AG04450 (cell line): ENCODE measurements at regions of chr6 and their contacts with region 1.

Region 1: GRCh38 chr6:150813319-150813992 is 52.0 kb upstream of the MTHFD1L start:
- DNase-seq: no peak
- H3K4me3 ChIP-seq: no peak overlapping the region
- H3K27ac ChIP-seq: no peak overlapping the region
- H3K27me3 ChIP-seq: no peaks in the 10 kb centered on the region
- CTCF ChIP-seq: no peak

Region 2: GRCh38 chr6:150079604-150080003 is 733.9 kb before region 1 on chr6:
- CTCF ChIA-PET with region 1: interaction called, 36 read pairs
- POLR2A ChIA-PET with region 1: no interaction called
- DNase-seq: no peak
- H3K4me3 ChIP-seq: no peak overlapping the region
- H3K27ac ChIP-seq: no peak overlapping the region
- H3K27me3 ChIP-seq: peaks cover 14% of the 10 kb centered on the region
- CTCF ChIP-seq: no peak

Region 3: DNA sequence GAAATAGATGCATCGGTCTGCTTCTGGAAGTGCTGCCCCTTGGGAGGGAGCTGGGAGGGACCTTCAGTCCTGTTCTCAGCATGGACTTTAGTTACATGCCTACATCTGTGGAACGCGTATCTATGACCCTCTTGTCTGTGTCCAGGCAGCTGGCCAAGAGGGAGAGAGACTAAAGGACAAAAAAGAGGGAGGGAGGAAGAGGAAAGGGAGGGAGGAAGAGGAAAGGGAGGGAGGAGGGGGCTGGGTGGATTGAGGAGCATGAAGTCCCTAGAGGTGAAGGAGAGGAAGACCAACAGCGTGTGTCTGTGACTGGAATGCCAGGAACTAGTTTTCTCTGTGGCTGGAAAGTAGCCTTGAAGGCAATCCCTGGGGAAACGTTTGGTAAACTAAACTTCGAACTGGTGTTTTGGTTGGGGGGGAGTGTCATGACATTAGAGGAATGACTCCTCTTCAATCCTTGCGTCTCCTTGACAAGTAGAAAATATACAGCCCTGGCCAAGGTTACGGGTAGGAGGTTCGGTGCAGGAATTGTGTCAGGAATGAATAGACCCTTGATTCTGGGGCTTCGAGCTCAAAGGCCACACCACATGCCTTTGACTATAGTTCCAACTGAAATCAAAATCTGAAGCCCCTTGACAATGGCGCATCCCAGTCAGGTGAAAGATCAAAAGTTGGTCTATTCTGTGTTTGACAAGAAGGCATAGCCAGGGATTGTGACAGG is 265.8 kb before region 1 on chr6:
- CTCF ChIA-PET with region 1: no interaction called
- POLR2A ChIA-PET with region 1: no interaction called
- DNase-seq: no peak
- H3K4me3 ChIP-seq: no peak overlapping the region
- H3K27ac ChIP-seq: no peak overlapping the region
- H3K27me3 ChIP-seq: peaks cover 3% of the 10 kb centered on the region
- CTCF ChIP-seq: no peak

Region 4: DNA sequence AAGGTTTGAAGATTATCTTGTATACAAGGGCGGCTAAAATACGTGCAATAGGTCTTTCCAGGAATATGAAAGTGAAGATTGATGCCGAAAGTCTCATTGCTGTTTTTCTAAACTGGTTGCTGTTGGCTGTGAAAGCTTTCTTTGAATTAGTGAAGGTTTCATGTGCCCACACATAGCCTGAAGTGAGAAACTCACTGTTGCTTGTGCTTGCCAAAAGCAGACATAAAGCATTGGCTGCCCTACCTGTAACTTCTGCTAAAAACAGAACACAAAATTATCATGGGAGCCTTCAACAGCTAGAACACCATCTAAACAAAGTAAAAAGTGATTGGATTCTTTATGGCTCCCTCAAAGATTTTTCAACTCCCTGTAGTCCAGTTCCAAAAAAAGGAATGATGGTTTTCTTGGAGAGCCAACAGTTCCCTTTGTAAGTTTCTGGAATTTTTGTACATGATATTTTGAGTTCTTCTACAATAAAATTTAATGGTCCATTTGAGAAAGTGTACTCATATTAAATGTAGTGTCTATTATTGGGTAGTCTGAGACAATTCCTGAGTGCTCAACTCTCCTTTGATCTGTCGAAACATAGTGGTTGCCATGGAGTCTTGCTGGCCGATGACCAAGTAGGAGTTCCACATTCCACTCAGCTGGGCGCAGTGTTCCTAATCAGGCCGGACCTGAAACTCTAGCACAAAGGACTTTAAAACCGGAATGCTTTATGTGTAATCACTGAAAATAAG is 145.3 kb before region 1 on chr6:
- CTCF ChIA-PET with region 1: no interaction called
- POLR2A ChIA-PET with region 1: no interaction called
- DNase-seq: peak; percentile 2
- H3K4me3 ChIP-seq: no peak overlapping the region
- H3K27ac ChIP-seq: no peak overlapping the region
- H3K27me3 ChIP-seq: no peaks in the 10 kb centered on the region
- CTCF ChIP-seq: 0 out of 2 replicates have a peak, but pooled peaks have one; percentile 8

Region 5: GRCh38 chr6:150800674-150801314 is 12.7 kb before region 1 on chr6:
- CTCF ChIA-PET with region 1: interaction called, 15 read pairs
- POLR2A ChIA-PET with region 1: interaction called, 5 read pairs
- DNase-seq: peak; percentile 4
- H3K4me3 ChIP-seq: no peak overlapping the region
- H3K27ac ChIP-seq: peak overlapping the region; percentile 1
- H3K27me3 ChIP-seq: no peaks in the 10 kb centered on the region
- CTCF ChIP-seq: no peak

Region 6: DNA sequence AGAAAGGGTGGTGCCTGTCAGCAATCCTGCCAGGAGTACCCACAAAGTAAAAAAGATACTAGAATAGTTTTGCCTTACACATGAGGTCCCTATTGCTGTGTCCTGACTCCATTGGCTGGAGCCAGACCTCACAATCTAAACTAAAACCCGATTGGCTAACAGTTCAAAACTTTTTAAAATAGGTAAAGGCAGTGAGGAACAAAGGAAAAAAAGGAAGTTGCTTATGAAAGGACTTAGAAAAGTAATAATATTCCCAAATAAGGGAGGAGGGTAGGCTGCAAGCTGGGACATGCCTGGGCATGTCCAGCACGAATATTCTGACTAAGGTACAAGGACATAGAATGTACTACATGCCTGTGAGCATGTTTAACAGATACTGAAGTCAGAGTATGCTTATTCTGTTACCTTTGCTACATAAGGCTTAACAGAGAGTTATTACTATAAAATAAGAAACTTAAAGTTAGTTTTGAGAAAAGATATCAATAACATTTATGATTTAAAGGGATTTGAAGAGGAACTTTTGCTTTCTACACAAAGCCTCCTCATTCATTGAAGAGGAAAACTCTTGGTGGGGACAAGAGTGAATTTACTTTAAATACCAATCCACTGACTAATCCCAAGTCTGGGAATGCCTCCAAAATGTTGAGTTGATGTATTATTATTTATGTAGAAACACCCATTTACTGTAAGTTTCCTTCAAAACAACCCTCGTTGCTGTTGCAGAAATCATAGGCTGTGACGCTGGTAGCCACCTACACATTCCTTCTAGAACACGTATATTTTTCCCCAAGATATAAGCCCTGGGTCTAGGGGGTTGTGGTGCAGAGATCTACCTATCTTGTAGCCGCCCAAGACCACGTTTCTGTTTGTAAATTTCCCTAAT is 43.8 kb after region 1 on chr6:
- CTCF ChIA-PET with region 1: interaction called, 38 read pairs
- POLR2A ChIA-PET with region 1: no interaction called
- DNase-seq: peak; percentile 99
- H3K4me3 ChIP-seq: no peak overlapping the region
- H3K27ac ChIP-seq: peak overlapping the region; percentile 100
- H3K27me3 ChIP-seq: no peaks in the 10 kb centered on the region
- CTCF ChIP-seq: no peak

Region 7: GRCh38 chr6:150881911-150882481 is 68.5 kb after region 1 on chr6:
- CTCF ChIA-PET with region 1: interaction called, 19 read pairs
- POLR2A ChIA-PET with region 1: no interaction called
- DNase-seq: peak; percentile 88
- H3K4me3 ChIP-seq: no peak overlapping the region
- H3K27ac ChIP-seq: peak overlapping the region; percentile 88
- H3K27me3 ChIP-seq: no peaks in the 10 kb centered on the region
- CTCF ChIP-seq: no peak

Region 8: DNA sequence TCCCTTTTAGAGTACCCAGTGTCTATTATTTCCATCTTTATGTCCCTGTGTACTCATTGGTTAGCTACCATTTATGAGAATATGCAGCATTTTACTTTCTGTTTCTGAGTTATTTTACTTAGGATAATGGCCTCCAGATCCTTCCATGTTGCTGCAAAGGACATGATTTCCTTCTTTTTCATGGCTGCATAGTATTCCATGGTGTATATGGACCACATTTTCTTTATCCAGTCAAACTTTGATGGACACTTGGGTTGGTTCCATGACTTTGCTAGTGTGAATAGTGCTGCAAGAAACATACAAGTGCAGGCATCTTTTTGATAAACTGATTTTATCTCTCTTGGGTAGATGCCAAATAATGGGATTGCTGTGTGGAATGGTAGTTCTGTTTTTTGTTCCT is 522.5 kb after region 1 on chr6:
- CTCF ChIA-PET with region 1: interaction called, 35 read pairs
- POLR2A ChIA-PET with region 1: no interaction called
- DNase-seq: no peak
- H3K4me3 ChIP-seq: no peak overlapping the region
- H3K27ac ChIP-seq: no peak overlapping the region
- H3K27me3 ChIP-seq: no peaks in the 10 kb centered on the region
- CTCF ChIP-seq: no peak